HepG2 (cell line): ENCODE measurements at regions of chr5 and their contacts with region 1.

Region 1: DNA sequence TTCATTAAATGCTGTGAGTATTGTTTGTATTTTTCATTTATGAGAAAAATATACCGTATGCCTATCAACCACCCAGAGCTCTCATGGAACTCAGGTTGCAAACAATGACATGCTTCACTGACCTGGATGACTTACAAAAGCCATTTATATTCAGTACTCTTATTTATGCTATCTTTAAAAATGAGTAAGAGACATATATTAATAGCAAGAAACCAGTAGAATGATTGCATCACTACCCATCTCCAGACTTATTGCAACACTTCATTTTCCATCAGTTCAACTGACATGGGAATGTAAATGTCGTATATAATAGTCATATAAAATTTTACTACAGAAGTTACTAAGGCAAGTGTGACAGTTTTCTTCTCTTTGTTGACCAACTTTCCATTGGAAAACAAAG is 69.1 kb downstream of the OTP start:
- DNase-seq: no peak
- ATAC-seq: no peak
- H3K4me3 ChIP-seq: no peak overlapping the region
- H3K27ac ChIP-seq: no peak overlapping the region
- H3K4me1 ChIP-seq: no peaks in the 10 kb centered on the region
- H3K27me3 ChIP-seq: no peaks in the 10 kb centered on the region; a peak in 1 of 5 replicates
- CTCF ChIP-seq: no peak
- EP300 ChIP-seq: no peak
- POLR2A ChIP-seq: no peak
- RAD21 ChIP-seq: no peak

Region 2: GRCh38 chr5:77638763-77639671 is 69.6 kb after region 1 on chr5:
- CTCF ChIA-PET with region 1: no interaction called
- POLR2A ChIA-PET with region 1: no interaction called
- in situ Hi-C with region 1: loop called (anchors 5 kb)
- intact Hi-C with region 1: no loop called
- DNase-seq: no peak
- ATAC-seq: no peak
- H3K4me3 ChIP-seq: no peak overlapping the region
- H3K27ac ChIP-seq: no peak overlapping the region
- H3K4me1 ChIP-seq: no peaks in the 10 kb centered on the region
- H3K27me3 ChIP-seq: peaks cover 6 to 76% of the 10 kb centered on the region in 2 experiments
- CTCF ChIP-seq: no peak
- EP300 ChIP-seq: no peak
- POLR2A ChIP-seq: no peak
- RAD21 ChIP-seq: no peak